Activated T-helper 1 cell treated with anti-CD3 and anti-CD28 coated beads, Interleukin-12 subunit alpha, Interleukin-12 subunit beta, Interleukin-2, Interleukin-4 antibody, amounts not matched to agents 30 ng/mL and 10 ng/mL and 1 ng/mL, durations not matched to agents 14 hours and 24 hours and 36 hours (primary cell): ENCODE measurements at regions of chr10 and their contacts with region 1.

Region 1: GRCh38 chr10:69222157-69223027 is 2.3 kb downstream of the HKDC1 start:
- DNase-seq: peak; percentile 81
- H3K4me3 Mint-ChIP-seq: peak overlapping the region; percentile 71
- H3K27ac Mint-ChIP-seq: peak overlapping the region; percentile 96
- H3K4me1 Mint-ChIP-seq: peaks cover 49% of the 10 kb centered on the region
- H3K27me3 Mint-ChIP-seq: no peaks in the 10 kb centered on the region

Region 2: DNA sequence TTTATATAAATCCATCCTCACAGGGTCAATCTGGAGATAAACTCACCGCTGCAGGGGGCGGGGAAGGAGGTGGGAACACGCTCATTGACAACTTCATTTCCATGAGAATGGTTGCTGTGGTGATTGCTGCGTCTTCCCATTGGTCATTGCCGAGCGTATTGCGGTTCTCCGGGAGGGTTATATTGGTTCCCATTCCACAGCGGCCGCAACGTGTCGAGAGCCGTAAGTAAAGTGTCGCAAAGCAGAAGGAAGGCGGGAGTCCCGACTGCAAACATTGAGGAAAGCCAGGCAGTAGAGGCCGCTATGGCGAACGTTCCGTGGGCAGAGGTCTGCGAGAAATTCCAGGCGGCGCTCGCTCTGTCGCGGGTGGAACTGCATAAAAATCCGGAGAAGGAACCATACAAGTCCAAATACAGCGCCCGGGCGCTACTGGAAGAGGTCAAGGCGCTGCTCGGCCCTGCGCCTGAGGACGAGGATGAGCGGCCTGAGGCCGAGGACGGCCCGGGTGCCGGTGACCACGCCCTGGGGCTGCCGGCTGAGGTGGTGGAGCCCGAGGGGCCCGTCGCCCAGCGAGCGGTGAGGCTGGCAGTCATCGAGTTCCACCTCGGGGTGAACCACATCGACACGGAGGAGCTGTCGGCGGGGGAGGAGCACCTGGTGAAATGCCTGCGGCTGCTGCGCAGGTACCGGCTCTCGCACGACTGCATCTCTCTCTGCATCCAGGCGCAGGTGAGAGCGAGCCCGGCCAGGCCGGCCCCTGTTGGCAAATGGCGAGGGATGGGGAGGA is 233.7 kb before region 1 on chr10 and contains the start of gene KIFBP:
- intact Hi-C with region 1: loop called (anchors 1 kb)
- DNase-seq: peak; percentile 84
- H3K4me3 Mint-ChIP-seq: peak within 1 kb of the TSS; percentile 93
- H3K27ac Mint-ChIP-seq: peak within 1 kb of the TSS; percentile 87
- H3K4me1 Mint-ChIP-seq: peaks cover 34% of the 10 kb centered on the region
- H3K27me3 Mint-ChIP-seq: no peaks in the 10 kb centered on the region
- total RNA-seq, gene KIFBP: 16.4 and 16.9 TPM in 2 replicates

Region 3: GRCh38 chr10:69004821-69005220 is 217.6 kb before region 1 on chr10:
- intact Hi-C with region 1: loop called (anchors 2 kb)
- DNase-seq: no peak
- H3K4me3 Mint-ChIP-seq: no peak overlapping the region
- H3K27ac Mint-ChIP-seq: no peak overlapping the region
- H3K4me1 Mint-ChIP-seq: peaks cover 18% of the 10 kb centered on the region
- H3K27me3 Mint-ChIP-seq: no peaks in the 10 kb centered on the region

Region 4: DNA sequence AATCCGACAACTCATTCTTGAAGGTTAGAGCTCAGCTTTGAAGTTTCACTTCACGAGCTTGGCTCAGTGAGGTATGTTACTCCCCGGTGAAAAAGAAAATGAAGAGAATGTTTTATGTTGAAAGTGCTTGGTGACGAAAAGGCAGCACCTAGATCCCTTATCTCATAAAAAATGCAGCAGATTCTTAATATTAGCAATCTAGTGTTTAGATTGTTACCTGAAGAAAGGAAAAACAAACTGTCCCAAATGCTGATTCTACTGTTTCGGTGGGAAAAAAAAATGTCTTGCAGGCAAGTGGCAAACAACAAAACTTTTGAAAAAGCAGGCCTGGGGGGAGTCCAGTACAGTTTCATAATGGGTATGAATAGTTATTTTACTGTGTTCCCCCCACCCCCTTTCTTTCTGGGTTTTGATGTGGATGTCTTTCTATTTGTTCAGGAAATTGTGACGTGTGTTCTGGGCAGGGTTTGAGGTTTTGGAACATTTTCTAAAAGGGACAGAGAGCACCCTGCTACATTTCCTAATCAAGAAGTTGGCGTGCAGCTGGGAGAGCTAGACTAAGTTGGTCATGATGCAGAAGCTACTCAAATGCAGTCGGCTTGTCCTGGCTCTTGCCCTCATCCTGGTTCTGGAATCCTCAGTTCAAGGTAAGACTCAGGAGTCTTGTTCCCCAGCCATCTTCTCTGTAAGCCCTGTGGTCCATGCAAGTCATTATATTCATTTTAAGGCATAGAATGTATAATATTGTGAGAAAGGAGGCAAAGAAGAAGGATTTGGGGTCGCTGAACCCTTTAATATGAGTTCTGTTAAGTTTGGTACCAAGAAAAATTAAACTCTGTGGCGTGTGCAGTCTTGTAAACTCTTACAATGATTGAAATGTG is 134.6 kb before region 1 on chr10 and contains the start of gene SRGN:
- intact Hi-C with region 1: loop called (anchors 1 kb)
- DNase-seq: peak; percentile 81
- H3K4me3 Mint-ChIP-seq: peak within 1 kb of the TSS; percentile 92
- H3K27ac Mint-ChIP-seq: peak within 1 kb of the TSS; percentile 93
- H3K4me1 Mint-ChIP-seq: peaks cover 52% of the 10 kb centered on the region
- H3K27me3 Mint-ChIP-seq: no peaks in the 10 kb centered on the region
- total RNA-seq, gene SRGN: 1,217 and 1,242 TPM in 2 replicates

Region 5: DNA sequence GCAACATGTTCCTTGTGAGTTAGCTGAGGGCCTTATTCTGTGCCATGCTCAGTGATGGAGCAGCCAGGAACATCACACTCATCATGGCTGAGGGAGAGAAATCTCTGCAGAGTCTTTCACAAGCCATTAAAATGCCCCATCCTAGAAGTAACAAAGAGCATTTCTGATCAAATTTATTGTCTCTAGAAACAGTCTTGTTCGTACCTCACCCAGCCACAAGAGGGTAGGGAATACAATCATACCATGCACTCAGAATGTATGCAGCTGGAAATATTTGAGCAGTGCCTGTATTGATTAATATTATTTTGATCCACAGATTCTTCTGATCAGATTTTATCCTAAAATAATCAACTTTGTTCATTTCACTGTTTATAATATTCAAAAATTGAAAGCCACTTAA is 81.1 kb before region 1 on chr10:
- intact Hi-C with region 1: no loop called
- DNase-seq: no peak
- H3K4me3 Mint-ChIP-seq: no peak overlapping the region
- H3K27ac Mint-ChIP-seq: no peak overlapping the region
- H3K4me1 Mint-ChIP-seq: peaks cover 13% of the 10 kb centered on the region
- H3K27me3 Mint-ChIP-seq: no peaks in the 10 kb centered on the region

Region 6: DNA sequence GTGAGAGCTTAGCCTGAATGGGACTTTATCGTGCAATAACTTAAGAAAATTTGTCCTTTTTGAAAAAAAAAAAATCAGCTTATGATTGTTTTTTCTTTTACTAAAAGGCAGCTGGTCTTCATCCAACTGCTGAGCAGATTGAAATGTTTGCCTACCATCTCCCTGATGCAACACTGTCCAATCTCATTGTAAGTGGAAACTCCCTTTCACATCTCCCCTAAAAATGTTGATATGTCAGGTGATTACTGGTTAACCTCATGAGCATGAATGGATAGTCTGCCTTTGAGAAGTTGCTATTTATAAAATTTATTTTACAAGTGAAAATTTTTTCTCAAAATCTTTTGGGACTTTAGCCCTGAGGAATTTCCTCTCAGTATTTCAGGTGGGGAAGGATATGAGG is 20.1 kb before region 1 on chr10:
- intact Hi-C with region 1: loop called (anchors 1 kb)
- DNase-seq: no peak
- H3K4me3 Mint-ChIP-seq: peak overlapping the region; percentile 72
- H3K27ac Mint-ChIP-seq: peak overlapping the region; percentile 82
- H3K4me1 Mint-ChIP-seq: peaks cover 63% of the 10 kb centered on the region
- H3K27me3 Mint-ChIP-seq: no peaks in the 10 kb centered on the region

Region 7: DNA sequence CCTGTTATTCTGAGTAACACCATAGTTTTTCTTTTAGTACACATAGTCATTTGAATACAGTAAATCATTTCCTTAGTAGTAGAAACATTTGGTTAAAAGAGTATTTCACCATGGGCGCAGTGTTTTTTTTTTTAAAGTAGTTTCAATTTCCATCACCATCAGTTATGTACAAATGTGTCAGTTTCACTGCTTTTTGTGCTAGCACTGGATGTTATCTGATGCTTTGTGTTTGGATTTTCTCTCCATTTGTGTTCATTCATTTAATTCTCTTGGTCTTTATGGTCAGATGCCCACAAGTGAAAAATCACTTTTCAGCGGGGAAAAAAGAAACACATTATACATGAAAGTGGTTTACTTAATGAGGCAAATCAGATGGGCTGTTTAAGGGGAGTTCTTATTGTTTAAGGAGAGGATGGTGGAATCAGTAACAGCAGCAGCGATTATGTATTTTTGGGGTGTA is 39.9 kb after region 1 on chr10:
- intact Hi-C with region 1: loop called (anchors 1 kb)
- DNase-seq: no peak
- H3K4me3 Mint-ChIP-seq: peak overlapping the region; percentile 3
- H3K27ac Mint-ChIP-seq: peak overlapping the region; percentile 32
- H3K4me1 Mint-ChIP-seq: peaks cover 22% of the 10 kb centered on the region
- H3K27me3 Mint-ChIP-seq: peaks cover 7% of the 10 kb centered on the region